ENCODE measurements at regions of chr17 and their contacts with region 1.

Region 1: GRCh38 chr17:58417300-58418092 is at the start of gene RNF43:
- DNase-seq: peak; percentile 96
- ATAC-seq: peak; percentile 100
- H3K4me3 Mint-ChIP-seq: peak within 1 kb of the TSS; percentile 23
- H3K27ac Mint-ChIP-seq: peak within 1 kb of the TSS; percentile 66
- H3K4me1 Mint-ChIP-seq: peaks cover 21% of the 10 kb centered on the region
- H3K27me3 Mint-ChIP-seq: no peaks in the 10 kb centered on the region
- CTCF ChIP-seq: peak; percentile 78
- total RNA-seq, gene RNF43: 0.34 to 1.1 TPM

Region 2: DNA sequence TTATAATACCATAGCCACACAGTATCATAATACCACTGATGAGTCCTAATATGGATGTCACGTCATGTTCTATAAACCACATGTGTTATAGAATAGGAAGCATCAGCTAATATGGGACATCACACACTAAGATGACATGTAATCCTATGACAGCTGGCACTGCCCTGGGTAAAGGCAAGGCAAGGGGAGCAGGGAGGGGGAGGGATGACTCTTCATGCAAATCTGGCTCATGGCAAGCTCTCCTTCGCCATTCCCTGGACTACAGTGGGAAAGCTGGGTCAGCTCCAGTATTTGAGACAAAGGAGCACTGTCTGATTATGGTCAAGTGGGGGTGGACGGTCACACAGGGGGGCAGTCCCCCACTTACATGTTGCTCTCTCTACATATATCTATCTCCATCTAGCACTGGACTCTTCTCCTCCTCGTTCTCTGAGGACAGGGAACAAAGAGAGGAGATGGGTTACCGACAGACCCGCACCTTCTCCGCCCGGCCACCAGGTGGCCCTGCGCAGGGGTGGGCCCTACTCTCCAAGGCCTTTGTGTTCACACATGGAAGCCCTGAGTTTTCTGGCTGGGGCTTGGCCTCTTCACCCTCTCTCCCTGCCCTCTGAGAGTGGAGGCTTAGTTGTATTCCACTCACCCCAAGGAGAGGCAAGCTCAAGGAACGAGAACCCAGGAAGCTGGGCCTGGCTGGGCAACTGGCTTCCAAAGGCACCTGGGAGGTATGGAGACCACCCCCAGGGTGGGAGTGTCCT is 113.3 kb before region 1 on chr17:
- CTCF ChIA-PET with region 1: interaction called, 16 read pairs
- POLR2A ChIA-PET with region 1: no interaction called
- intact Hi-C with region 1: no loop called
- DNase-seq: peak; percentile 66
- ATAC-seq: peak; percentile 99
- H3K4me3 Mint-ChIP-seq: no peak overlapping the region
- H3K27ac Mint-ChIP-seq: no peak overlapping the region
- H3K4me1 Mint-ChIP-seq: peaks cover 2% of the 10 kb centered on the region
- H3K27me3 Mint-ChIP-seq: no peaks in the 10 kb centered on the region
- CTCF ChIP-seq: peak; percentile 89

Region 3: DNA sequence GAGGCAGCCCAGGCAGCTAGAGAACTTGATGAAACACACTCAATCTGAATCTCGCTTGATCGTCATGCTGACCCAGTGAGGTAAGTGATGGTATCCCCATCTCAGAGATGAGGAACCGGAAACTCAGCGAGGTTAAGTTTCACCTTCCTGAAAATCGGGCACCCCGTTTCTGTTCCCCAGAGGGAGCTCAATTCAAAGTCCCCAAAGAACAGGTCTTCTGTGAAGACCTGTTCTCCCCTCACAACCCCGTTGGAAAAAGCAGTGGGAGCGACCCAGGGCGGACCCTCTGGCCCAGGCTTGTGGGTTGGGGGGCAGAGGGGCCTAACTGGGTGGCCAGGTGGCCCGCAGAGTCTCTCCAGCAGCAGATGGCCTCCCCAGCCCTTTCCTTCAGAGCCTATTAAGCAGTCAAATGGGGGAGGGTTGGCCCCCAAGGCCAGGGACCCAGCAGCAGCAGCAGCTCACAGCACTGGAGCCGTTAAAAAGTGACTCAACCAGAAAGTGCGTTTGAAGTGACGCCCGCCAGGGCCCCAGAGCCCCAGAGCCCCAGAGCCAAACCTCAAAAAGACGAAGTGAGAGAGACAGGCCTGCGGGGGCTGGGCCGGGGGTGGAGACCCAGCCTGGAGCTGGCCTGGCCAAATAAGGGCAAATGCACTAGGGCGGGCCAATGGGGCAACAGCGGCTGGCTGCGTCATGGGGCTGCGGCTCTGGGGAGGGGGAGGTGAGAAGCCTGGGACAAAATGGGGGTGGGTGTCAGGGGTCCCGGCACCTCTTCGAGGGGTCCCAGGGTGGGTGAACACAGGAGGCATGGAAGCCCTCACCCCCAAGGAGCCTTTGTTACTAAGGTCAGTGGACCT is 79.7 kb before region 1 on chr17:
- CTCF ChIA-PET with region 1: interaction called, 9 read pairs
- POLR2A ChIA-PET with region 1: interaction called, 5 read pairs
- intact Hi-C with region 1: loop called (anchors 5 kb)
- DNase-seq: peak; percentile 98
- ATAC-seq: peak; percentile 60
- H3K4me3 Mint-ChIP-seq: peak overlapping the region; percentile 81
- H3K27ac Mint-ChIP-seq: peak overlapping the region; percentile 96
- H3K4me1 Mint-ChIP-seq: peaks cover 3% of the 10 kb centered on the region
- H3K27me3 Mint-ChIP-seq: no peaks in the 10 kb centered on the region
- CTCF ChIP-seq: no peak

Region 4: DNA sequence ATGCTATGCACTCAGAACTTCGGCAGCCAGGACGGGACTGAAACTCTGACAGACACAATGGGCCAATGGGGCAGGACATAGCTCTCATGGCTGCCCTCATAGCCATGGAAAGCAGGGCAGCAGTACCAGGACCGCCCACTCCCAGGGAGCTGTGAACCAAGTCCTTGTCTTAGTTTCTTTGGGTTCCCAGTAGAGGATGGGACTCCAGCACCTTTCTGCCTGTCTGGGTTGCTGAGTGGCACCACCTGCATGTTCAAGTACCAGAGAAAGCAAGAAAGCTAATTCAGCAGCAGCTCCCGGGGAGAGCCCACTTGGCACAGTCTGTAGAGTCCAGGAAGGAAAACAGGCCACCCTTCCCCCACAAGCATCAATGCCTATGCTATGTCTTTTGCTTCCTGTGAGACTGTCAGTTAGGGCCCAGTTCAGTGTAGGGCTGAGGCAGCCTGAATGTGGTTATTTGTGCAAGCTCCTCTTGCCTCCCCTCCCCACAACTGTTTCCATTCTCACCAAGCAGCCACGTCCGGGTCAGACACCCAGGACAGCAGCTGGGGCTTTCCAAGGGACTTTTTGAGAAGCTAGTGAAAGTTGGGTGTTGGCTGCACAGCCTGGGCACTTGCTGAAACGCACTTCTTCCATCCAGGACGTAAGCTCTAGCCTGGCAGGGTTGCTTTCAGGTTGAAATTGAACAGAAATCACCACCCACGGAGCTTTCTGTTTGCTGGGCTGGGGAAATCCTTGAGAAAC is 73.3 kb before region 1 on chr17:
- CTCF ChIA-PET with region 1: interaction called, 22 read pairs
- POLR2A ChIA-PET with region 1: interaction called, 5 read pairs
- intact Hi-C with region 1: loop called (anchors 5 kb)
- DNase-seq: peak; percentile 98
- ATAC-seq: peak; percentile 78
- H3K4me3 Mint-ChIP-seq: peak overlapping the region; percentile 81
- H3K27ac Mint-ChIP-seq: peak overlapping the region; percentile 96
- H3K4me1 Mint-ChIP-seq: peaks cover 53% of the 10 kb centered on the region
- H3K27me3 Mint-ChIP-seq: no peaks in the 10 kb centered on the region
- CTCF ChIP-seq: no peak

Region 5: GRCh38 chr17:58352014-58352842 is 65.3 kb before region 1 on chr17 and contains the start of gene SUPT4H1:
- CTCF ChIA-PET with region 1: interaction called, 17 read pairs
- POLR2A ChIA-PET with region 1: interaction called, 17 read pairs
- intact Hi-C with region 1: no loop called
- DNase-seq: peak; percentile 93
- ATAC-seq: peak; percentile 92
- H3K4me3 Mint-ChIP-seq: peak within 1 kb of the TSS; percentile 97
- H3K27ac Mint-ChIP-seq: peak within 1 kb of the TSS; percentile 97
- H3K4me1 Mint-ChIP-seq: peaks cover 43% of the 10 kb centered on the region
- H3K27me3 Mint-ChIP-seq: no peaks in the 10 kb centered on the region
- CTCF ChIP-seq: no peak
- total RNA-seq, gene SUPT4H1: 104 to 110 TPM

Region 6: DNA sequence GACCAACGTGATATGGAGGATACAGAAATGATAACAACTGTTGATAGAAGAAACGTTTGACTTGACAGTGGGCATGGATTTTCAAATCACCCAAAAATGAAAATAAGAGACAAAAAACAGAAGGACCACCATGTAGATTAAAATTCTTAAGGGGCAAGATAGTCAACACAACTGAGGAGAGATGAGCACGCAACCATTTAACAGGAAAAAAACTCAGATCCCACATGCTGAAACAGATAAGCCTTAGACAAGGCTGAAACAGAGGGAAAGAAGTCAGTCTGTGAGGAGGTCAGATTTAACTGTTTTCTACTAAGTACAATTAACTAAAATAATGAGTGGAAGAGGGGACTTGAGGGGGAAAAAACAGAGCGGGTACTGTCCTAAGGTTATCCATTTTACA is 21.3 kb before region 1 on chr17:
- CTCF ChIA-PET with region 1: interaction called, 10 read pairs
- POLR2A ChIA-PET with region 1: no interaction called
- intact Hi-C with region 1: no loop called
- DNase-seq: no peak
- ATAC-seq: no peak
- H3K4me3 Mint-ChIP-seq: no peak overlapping the region
- H3K27ac Mint-ChIP-seq: no peak overlapping the region
- H3K4me1 Mint-ChIP-seq: no peaks in the 10 kb centered on the region
- H3K27me3 Mint-ChIP-seq: no peaks in the 10 kb centered on the region
- CTCF ChIP-seq: no peak

Region 7: DNA sequence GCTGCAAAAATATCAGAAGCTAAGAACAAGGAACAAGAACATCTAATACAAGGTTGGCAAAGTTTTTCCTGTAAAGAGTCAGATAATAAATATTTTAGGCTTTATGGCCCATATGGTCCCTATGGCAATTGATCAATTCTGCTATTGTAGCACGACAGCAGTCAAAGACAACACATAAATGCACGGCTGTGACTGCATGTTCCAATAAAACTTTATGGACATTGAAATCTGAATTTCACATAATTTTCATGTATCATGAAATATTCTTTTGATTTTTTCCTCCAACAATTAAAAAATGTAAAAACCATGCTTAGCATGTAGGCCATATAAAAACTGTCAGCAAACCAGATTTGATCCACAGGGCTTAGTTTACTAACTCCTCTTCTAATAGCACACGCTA is 10.3 kb after region 1 on chr17:
- CTCF ChIA-PET with region 1: interaction called, 13 read pairs
- POLR2A ChIA-PET with region 1: interaction called, 3 read pairs
- intact Hi-C with region 1: no loop called
- DNase-seq: no peak
- ATAC-seq: no peak
- H3K4me3 Mint-ChIP-seq: no peak overlapping the region
- H3K27ac Mint-ChIP-seq: no peak overlapping the region
- H3K4me1 Mint-ChIP-seq: no peaks in the 10 kb centered on the region
- H3K27me3 Mint-ChIP-seq: no peaks in the 10 kb centered on the region
- CTCF ChIP-seq: no peak

Measured in activated CD8-positive, alpha-beta T cell treated with anti-CD3 and anti-CD28 coated beads for 36 hours (primary cell).